ENCODE measurements at regions of chr9 and their contacts with region 1.

Region 1: GRCh38 chr9:130017076-130017475 is 25.9 kb downstream of the FNBP1 start:
- DNase-seq: no peak
- H3K4me3 Mint-ChIP-seq: no peak overlapping the region
- H3K27ac Mint-ChIP-seq: peak overlapping the region; percentile 78
- H3K4me1 Mint-ChIP-seq: peaks cover 55% of the 10 kb centered on the region
- H3K27me3 Mint-ChIP-seq: no peaks in the 10 kb centered on the region

Region 2: GRCh38 chr9:129901993-129902739 is 114.9 kb before region 1 on chr9:
- CTCF ChIA-PET with region 1: no interaction called
- POLR2A ChIA-PET with region 1: interaction called, 23 read pairs
- DNase-seq: no peak
- H3K4me3 Mint-ChIP-seq: no peak overlapping the region
- H3K27ac Mint-ChIP-seq: peak overlapping the region; percentile 73
- H3K4me1 Mint-ChIP-seq: peaks cover 61% of the 10 kb centered on the region
- H3K27me3 Mint-ChIP-seq: no peaks in the 10 kb centered on the region

Region 3: GRCh38 chr9:130053504-130054324 is 36.6 kb after region 1 on chr9 and contains the start of gene GPR107:
- CTCF ChIA-PET with region 1: no interaction called
- POLR2A ChIA-PET with region 1: no interaction called
- DNase-seq: peak; percentile 80
- H3K4me3 Mint-ChIP-seq: peak within 1 kb of the TSS; percentile 91
- H3K27ac Mint-ChIP-seq: peak within 1 kb of the TSS; percentile 92
- H3K4me1 Mint-ChIP-seq: peaks cover 43% of the 10 kb centered on the region
- H3K27me3 Mint-ChIP-seq: no peaks in the 10 kb centered on the region
- total RNA-seq, gene GPR107: 21.7 to 22.1 TPM

Region 4: GRCh38 chr9:130172161-130172857 is 155.2 kb after region 1 on chr9 and contains the start of gene NCS1:
- CTCF ChIA-PET with region 1: no interaction called
- POLR2A ChIA-PET with region 1: no interaction called
- DNase-seq: peak; percentile 17
- H3K4me3 Mint-ChIP-seq: peak within 1 kb of the TSS; percentile 61
- H3K27ac Mint-ChIP-seq: peak within 1 kb of the TSS; percentile 66
- H3K4me1 Mint-ChIP-seq: peaks cover 8% of the 10 kb centered on the region
- H3K27me3 Mint-ChIP-seq: peaks cover 31% of the 10 kb centered on the region
- total RNA-seq, gene NCS1: 1.0 to 1.2 TPM

Measured in activated CD4-positive, alpha-beta T cell treated with anti-CD3 and anti-CD28 coated beads, Interleukin-2, amount 10 ng/mL, durations not matched to agents 7 days and 5 days (primary cell).